PC-9 (cell line): ENCODE measurements at regions of chr16 and their contacts with region 1.

Region 1: GRCh38 chr16:2603165-2604015 is 65.6 kb downstream of the PDPK1 start:
- DNase-seq: peak; percentile 92 to 98
- H3K4me3 ChIP-seq: peak overlapping the region; percentile 79
- H3K27ac ChIP-seq: peak overlapping the region; percentile 56
- H3K4me1 ChIP-seq: peaks cover 7% of the 10 kb centered on the region
- H3K27me3 ChIP-seq: no peaks in the 10 kb centered on the region
- CTCF ChIP-seq: no peak

Region 2: GRCh38 chr16:1941924-1942809 is 661.2 kb before region 1 on chr16:
- CTCF ChIA-PET with region 1: no interaction called
- POLR2A ChIA-PET with region 1: no interaction called
- intact Hi-C with region 1: no loop called
- DNase-seq: peak; percentile 63 to 79
- H3K4me3 ChIP-seq: peak overlapping the region; percentile 81
- H3K27ac ChIP-seq: peak overlapping the region; percentile 61
- H3K4me1 ChIP-seq: peaks cover 21% of the 10 kb centered on the region
- H3K27me3 ChIP-seq: no peaks in the 10 kb centered on the region
- CTCF ChIP-seq: no peak

Region 3: GRCh38 chr16:2592786-2593185 is 10.6 kb before region 1 on chr16:
- CTCF ChIA-PET with region 1: no interaction called
- POLR2A ChIA-PET with region 1: interaction called, 11 read pairs
- intact Hi-C with region 1: no loop called
- DNase-seq: no peak
- H3K4me3 ChIP-seq: no peak overlapping the region
- H3K27ac ChIP-seq: no peak overlapping the region
- H3K4me1 ChIP-seq: no peaks in the 10 kb centered on the region
- H3K27me3 ChIP-seq: no peaks in the 10 kb centered on the region
- CTCF ChIP-seq: no peak

Region 4: GRCh38 chr16:2614761-2615191 is 11.4 kb after region 1 on chr16:
- CTCF ChIA-PET with region 1: no interaction called
- POLR2A ChIA-PET with region 1: no interaction called
- intact Hi-C with region 1: no loop called
- DNase-seq: no peak
- H3K4me3 ChIP-seq: no peak overlapping the region
- H3K27ac ChIP-seq: no peak overlapping the region
- H3K4me1 ChIP-seq: no peaks in the 10 kb centered on the region
- H3K27me3 ChIP-seq: no peaks in the 10 kb centered on the region
- CTCF ChIP-seq: no peak